ENCODE measurements at regions of chr16 and their contacts with region 1.

Region 1: DNA sequence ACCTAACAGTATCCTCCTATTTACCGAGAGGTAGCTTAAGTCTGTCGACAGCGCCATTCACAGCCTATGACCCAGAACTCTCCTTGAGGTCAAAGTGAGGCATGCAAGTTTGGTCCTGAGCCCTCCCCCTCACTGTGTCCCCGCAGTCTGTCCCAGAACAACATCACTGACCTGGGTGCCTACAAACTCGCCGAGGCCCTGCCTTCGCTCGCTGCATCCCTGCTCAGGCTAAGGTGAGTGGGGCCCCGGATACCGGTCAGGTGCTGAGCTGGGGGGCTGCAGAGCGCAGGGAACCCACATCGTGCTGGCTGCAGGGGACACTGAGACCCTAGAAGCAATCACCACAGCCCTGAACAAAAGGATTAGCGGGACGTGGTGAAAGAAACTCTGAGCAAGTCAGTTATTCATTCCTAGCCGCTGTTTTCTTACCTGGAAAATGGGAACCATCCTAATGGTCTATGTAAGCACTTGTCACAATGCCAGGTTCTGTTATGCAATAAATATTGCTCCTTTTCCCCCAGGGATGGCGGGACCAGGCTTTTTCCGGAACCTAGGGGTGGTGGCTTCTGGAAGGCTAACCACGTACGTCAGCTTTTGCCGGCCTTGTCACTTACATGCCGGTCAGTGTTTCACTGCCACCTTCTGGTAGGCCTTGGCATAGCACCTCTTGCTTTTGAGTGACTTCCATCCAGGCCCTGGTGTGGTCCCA is 23.8 kb downstream of the DEXI start:
- DNase-seq: peak; percentile 95

Region 2: GRCh38 chr16:10325783-10326543 is 592.5 kb before region 1 on chr16:
- intact Hi-C with region 1: loop called (anchors 10 kb)
- DNase-seq: no peak

Region 3: DNA sequence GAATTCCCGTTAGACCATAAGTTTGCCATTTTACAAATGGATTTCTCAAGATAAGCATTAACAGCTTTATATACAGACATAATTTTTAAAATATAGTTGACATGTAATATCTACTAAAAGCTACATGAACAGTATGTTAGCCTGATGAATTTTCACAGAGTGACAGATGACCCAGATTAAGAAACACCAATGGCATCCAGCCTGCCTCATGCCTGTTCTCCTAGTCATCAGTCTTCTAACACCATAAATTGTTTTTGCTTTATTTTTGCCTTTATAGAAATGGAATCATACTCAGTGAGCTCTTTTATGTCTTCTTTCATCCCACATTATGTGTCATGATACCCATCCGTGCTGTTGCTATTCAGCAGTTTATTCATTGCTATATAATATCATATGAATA is 452.6 kb before region 1 on chr16:
- intact Hi-C with region 1: no loop called
- DNase-seq: no peak

Region 4: DNA sequence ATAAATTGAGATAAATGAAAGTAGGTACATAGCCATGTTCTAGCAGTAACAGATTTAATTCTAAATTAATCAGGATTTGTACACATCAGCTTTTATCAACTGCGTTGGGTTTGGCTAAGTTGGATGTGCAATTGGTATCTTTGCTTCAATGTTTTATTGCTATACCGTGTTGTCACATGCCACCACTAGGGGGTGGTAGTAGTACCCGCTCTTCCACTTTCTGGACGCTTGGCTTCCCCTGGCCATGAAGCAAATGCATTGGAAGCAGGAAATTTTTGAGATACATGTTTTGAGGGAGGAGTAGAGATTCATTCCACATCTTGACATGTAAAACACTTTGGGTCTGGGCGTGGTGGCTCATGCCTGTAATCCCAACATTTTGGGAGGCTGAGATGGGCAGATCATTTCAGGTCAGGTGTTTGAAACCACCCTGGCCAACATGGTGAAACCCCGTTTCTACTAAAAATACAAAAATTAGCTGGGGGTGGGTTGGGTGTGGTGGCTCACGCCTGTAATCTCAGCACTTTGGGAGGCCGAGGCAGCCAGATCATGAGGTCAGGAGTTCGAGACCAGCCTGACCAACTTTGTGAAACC is 396.7 kb before region 1 on chr16:
- intact Hi-C with region 1: loop called (anchors 5 kb)
- DNase-seq: no peak

Region 5: DNA sequence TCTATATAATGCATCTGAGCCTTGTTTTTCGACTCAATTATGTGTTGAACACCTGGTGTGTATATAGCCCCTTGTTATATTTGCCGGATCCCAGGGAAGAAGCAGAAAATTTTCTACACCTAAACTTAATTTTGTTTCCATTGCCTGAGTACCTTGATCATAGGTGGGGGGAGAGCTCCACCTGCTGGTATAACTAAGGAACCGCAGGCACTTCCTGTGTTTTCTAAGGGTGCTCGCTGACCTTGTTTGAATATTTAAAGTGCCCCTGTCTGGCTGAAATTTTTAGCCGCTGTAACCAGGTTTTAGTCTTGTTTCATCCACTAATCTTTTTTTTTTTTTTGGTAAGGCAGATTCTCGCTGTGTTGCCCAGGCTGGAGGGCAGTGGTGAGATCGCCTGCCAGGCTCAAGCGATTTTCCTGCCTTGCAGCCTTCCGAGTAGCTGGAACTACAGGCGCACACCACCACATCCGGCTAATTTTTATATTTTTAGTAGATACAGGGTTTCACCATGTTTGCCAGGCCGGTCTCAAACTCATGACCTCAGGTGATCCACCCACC is 181.3 kb before region 1 on chr16:
- intact Hi-C with region 1: loop called (anchors 2 kb)
- DNase-seq: no peak

Region 6: DNA sequence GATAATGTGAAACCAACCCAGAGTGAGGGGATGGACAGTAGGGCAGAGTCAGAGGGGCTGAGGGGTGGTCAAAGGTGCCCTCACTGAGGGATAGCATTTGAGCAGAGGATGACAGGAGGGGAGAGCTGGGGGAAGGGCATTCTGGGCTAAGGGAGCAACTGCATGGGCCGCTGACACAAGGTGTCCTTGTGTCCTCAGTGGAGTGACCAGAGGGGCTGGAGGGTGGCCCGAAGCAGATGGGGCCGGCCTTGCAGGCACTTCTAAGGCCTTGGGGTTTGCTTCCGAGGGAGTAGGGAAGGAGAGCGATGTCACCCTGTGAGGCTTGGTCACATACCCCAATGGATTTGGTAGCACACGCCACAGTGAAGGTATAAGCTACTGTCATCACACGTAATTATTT is 164.8 kb before region 1 on chr16:
- intact Hi-C with region 1: no loop called
- DNase-seq: peak; percentile 39

Region 7: GRCh38 chr16:10828851-10829731 is 89.4 kb before region 1 on chr16:
- intact Hi-C with region 1: loop called (anchors 2 kb)
- DNase-seq: peak; percentile 95

Region 8: DNA sequence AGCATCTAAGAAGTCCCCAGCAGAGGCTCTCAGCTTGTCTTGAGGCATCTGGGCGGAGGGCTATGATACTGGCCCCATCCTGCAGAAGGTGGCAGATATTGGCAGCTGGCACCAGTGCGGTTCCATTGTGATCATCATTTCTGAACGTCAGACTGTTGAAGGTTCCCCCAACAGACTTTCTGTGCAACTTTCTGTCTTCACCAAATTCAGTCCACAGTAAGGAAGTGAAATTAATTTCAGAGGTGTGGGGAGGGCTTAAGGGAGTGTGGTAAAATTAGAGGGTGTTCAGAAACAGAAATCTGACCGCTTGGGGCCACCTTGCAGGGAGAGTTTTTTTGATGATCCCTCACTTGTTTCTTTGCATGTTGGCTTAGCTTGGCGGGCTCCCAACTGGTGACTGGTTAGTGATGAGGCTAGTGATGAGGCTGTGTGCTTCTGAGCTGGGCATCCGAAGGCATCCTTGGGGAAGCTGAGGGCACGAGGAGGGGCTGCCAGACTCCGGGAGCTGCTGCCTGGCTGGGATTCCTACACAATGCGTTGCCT is 41.6 kb before region 1 on chr16 and contains the start of gene CIITA:
- intact Hi-C with region 1: loop called (anchors 5 kb)
- DNase-seq: no peak
- total RNA-seq, gene CIITA: 7.2 TPM

Region 9: DNA sequence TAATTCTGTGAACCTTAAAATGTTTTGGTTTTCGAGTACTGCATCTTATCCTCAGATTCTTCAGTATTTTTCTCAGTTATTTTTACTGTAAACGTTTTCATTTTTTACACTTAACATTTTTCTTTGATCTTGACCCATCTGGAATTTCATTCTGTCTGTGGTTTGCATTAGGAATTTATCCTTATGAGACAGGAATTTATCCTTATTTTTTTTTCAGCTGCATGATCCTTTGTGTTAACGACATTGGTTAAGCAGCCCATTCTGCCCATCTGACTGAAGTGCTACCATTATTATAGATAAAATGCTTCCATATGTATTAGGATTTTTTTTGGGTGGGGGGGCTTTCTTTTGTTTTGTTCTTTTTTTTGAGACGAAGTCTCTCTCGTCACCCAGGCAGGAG is 1099.1 kb after region 1 on chr16:
- intact Hi-C with region 1: no loop called
- DNase-seq: no peak

Measured in cardiac septum (tissue), 1 donor.